PC-9 (cell line): ENCODE measurements at regions of chr3 and their contacts with region 1.

Region 1: GRCh38 chr3:142586803-142587406 is 8.4 kb upstream of the ATR start:
- DNase-seq: peak; percentile 64 to 91
- H3K4me3 ChIP-seq: no peak overlapping the region
- H3K27ac ChIP-seq: no peak overlapping the region
- H3K4me1 ChIP-seq: peaks cover 14% of the 10 kb centered on the region
- H3K27me3 ChIP-seq: no peaks in the 10 kb centered on the region
- CTCF ChIP-seq: peak; percentile 79

Region 2: GRCh38 chr3:142828703-142829305 is 241.9 kb after region 1 on chr3:
- CTCF ChIA-PET with region 1: interaction called, 11 read pairs
- POLR2A ChIA-PET with region 1: no interaction called
- intact Hi-C with region 1: loop called (anchors 1 kb)
- DNase-seq: peak; percentile 61 to 81
- H3K4me3 ChIP-seq: no peak overlapping the region
- H3K27ac ChIP-seq: no peak overlapping the region
- H3K4me1 ChIP-seq: no peaks in the 10 kb centered on the region
- H3K27me3 ChIP-seq: no peaks in the 10 kb centered on the region
- CTCF ChIP-seq: peak; percentile 90

Region 3: GRCh38 chr3:142904639-142905436 is 317.9 kb after region 1 on chr3:
- CTCF ChIA-PET with region 1: no interaction called
- POLR2A ChIA-PET with region 1: no interaction called
- intact Hi-C with region 1: loop called (anchors 1 kb)
- DNase-seq: peak in 1 of 2 experiments; percentile 21
- H3K4me3 ChIP-seq: no peak overlapping the region
- H3K27ac ChIP-seq: no peak overlapping the region
- H3K4me1 ChIP-seq: no peaks in the 10 kb centered on the region
- H3K27me3 ChIP-seq: no peaks in the 10 kb centered on the region
- CTCF ChIP-seq: no peak

Region 4: DNA sequence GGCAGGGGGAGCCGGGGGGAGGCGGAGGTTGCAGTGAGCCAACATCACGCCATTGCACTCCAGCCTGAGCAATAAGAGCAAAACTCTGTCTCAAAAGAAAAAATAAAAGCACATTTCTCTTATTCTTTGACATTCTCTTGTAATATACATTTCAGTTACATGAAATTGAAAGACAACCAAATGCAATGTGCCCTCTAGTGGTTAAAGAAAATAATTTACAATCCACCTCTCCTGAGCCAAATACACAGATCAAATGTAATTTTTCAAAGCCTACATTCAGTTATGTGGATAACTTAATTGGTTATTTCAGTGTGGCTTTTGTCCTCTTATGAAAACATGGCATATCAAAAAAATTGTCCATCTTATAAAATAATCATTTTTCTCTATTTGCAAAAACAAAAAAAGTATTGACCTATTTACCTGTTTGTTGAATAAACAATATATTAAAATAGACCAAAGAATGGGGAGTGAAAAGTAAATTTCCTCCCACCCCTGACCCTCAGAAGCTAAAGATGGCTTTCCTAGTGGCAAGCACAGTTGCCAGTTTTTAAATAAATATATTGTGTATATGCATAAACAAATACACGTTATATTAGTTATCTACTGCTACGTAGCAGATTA is 400.3 kb after region 1 on chr3:
- CTCF ChIA-PET with region 1: interaction called, 3 read pairs
- POLR2A ChIA-PET with region 1: no interaction called
- intact Hi-C with region 1: loop called (anchors 2 kb)
- DNase-seq: peak in 1 of 2 experiments; percentile 55
- H3K4me3 ChIP-seq: no peak overlapping the region
- H3K27ac ChIP-seq: no peak overlapping the region
- H3K4me1 ChIP-seq: no peaks in the 10 kb centered on the region
- H3K27me3 ChIP-seq: no peaks in the 10 kb centered on the region
- CTCF ChIP-seq: peak; percentile 79

Region 5: GRCh38 chr3:142993958-142994442 is 407.1 kb after region 1 on chr3:
- CTCF ChIA-PET with region 1: interaction called, 4 read pairs
- POLR2A ChIA-PET with region 1: no interaction called
- intact Hi-C with region 1: loop called (anchors 1 kb)
- DNase-seq: peak; percentile 67 to 70
- H3K4me3 ChIP-seq: no peak overlapping the region
- H3K27ac ChIP-seq: no peak overlapping the region
- H3K4me1 ChIP-seq: peaks cover 21% of the 10 kb centered on the region
- H3K27me3 ChIP-seq: no peaks in the 10 kb centered on the region
- CTCF ChIP-seq: peak; percentile 85